ENCODE measurements at regions of chr19 and their contacts with region 1.

Region 1: GRCh38 chr19:7799640-7800355 is 30.2 kb upstream of the EVI5L start:
- DNase-seq: peak; percentile 61 to 83
- ATAC-seq: no peak
- H3K4me3 ChIP-seq: no peak overlapping the region
- H3K27ac ChIP-seq: no peak overlapping the region
- H3K4me1 ChIP-seq: no peaks in the 10 kb centered on the region
- H3K27me3 ChIP-seq: no peaks in the 10 kb centered on the region

Region 2: GRCh38 chr19:7355151-7355820 is 444.5 kb before region 1 on chr19:
- intact Hi-C with region 1: loop called (anchors 5 to 10 kb)
- DNase-seq: peak in 1 of 2 donors; percentile 66
- ATAC-seq: peak; percentile 45
- H3K4me3 ChIP-seq: no peak overlapping the region
- H3K27ac ChIP-seq: no peak overlapping the region
- H3K4me1 ChIP-seq: no peaks in the 10 kb centered on the region
- H3K27me3 ChIP-seq: no peaks in the 10 kb centered on the region

Region 3: GRCh38 chr19:7366701-7367420 is 432.9 kb before region 1 on chr19:
- intact Hi-C with region 1: loop called in 1 of 2 experiments (anchors 10 kb)
- DNase-seq: peak; percentile 7 to 23
- ATAC-seq: no peak
- H3K4me3 ChIP-seq: no peak overlapping the region
- H3K27ac ChIP-seq: no peak overlapping the region
- H3K4me1 ChIP-seq: no peaks in the 10 kb centered on the region
- H3K27me3 ChIP-seq: no peaks in the 10 kb centered on the region

Region 4: GRCh38 chr19:7565332-7565731 is 234.5 kb before region 1 on chr19:
- intact Hi-C with region 1: loop called (anchors 5 kb)
- DNase-seq: no peak
- ATAC-seq: no peak
- H3K4me3 ChIP-seq: no peak overlapping the region
- H3K27ac ChIP-seq: no peak overlapping the region
- H3K4me1 ChIP-seq: no peaks in the 10 kb centered on the region
- H3K27me3 ChIP-seq: no peaks in the 10 kb centered on the region

Region 5: DNA sequence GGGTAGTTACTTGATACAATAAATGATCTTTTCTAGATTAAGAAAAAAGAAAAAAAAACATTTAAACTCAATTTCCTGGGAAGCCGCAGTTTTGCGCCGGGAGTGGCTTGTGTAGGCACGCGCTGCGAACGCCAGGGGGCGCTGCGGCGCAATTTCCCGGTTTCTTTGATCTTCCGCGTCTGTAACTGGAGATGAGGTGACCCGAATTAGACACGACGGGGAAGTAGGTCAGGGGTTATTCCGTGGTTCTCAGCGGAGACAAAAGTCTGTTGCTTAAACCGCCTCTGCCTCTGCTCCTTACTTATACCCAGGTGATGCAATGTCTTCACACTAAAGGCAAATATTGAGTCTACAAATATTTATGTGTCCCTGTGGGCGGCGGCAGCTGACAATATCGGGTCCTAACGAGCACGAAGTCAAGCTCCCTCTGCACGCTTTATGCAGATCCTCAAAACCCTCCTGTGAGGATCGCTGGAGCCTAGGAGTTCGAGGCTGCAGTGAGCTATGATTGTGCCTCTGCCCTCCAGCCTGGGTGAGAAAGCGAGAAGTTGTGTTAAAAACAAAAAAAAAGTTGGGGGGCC is 147.6 kb before region 1 on chr19:
- intact Hi-C with region 1: loop called (anchors 5 to 10 kb)
- DNase-seq: peak; percentile 86 to 95
- ATAC-seq: peak; percentile 88
- H3K4me3 ChIP-seq: no peak overlapping the region
- H3K27ac ChIP-seq: no peak overlapping the region
- H3K4me1 ChIP-seq: no peaks in the 10 kb centered on the region
- H3K27me3 ChIP-seq: no peaks in the 10 kb centered on the region

Region 6: DNA sequence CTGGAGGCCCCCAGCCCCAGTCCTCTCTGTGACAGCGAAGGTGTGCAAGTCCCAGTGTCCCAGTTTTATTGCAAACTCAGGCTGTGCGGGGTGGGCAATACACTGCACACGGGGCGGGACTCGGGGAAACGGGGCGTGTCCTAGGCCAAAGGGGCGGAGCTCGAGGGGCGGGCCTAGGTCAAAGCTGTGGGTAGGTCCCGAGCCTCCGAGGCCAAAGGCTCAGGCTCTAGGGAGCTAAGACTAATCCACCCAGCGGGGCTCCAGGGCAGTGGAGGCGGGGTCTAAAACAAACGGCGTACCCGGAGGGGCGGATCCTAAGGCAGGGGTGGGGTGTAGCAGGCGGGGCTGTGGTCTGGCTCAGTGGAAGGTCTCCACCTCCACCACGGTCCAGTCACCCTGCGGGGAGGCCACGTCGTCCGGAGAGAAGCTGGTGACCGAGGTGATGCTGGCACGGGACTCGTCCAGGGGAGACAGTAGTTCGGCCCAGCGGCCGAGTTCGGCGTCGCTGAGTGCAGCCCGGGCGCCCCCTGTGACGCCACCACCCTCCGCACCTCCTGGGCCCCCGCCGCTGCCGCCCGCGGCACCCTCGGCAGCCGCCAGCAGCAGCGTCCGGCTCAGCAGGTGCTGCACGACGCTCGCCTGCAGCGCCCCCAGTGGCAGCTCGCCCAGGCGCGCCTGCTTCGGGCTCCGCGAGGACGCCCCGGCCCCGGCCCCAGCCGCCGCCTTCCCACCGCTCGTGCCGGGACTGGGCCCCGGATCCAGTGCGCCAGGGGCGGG is 69.1 kb after region 1 on chr19:
- intact Hi-C with region 1: no loop called
- DNase-seq: peak; percentile 79 to 90
- ATAC-seq: peak; percentile 44
- H3K4me3 ChIP-seq: no peak overlapping the region
- H3K27ac ChIP-seq: no peak overlapping the region
- H3K4me1 ChIP-seq: no peaks in the 10 kb centered on the region
- H3K27me3 ChIP-seq: peaks cover 0 to 1% of the 10 kb centered on the region in 2 donors